Naive thymus-derived CD4-positive, alpha-beta T cell (primary cell): ENCODE measurements at regions of chr16 and their contacts with region 1.

Region 1: DNA sequence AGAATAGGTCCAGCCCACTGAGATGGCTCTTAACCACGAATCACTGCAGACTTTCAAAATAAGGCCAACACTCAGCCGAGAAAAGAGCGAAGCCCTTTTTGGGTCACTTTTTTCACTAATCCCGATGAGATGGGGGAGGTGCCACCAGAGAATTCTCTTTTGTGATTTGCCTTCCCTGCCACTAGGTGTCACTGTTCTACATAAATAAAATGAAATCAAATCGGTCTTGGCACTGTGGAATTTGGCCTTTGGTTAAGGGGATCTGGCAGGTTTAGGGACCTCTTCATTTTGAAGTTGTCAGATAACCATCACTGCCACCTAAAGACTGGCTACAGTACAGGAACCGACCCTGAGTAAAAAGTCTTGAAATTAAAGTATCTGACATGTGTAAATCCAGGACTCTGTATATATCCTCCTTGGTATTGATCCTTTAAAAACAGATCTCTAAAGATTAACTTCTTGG is 147.0 kb downstream of the HS3ST4 start:
- DNase-seq: peak in 8 of 9 donors; percentile 13 to 59 (median 38)
- ATAC-seq: peak; percentile 54
- H3K4me3 ChIP-seq: no peak overlapping the region
- H3K4me3 Mint-ChIP-seq: peak overlapping the region in 1 of 10 donors; percentile 8
- H3K27ac ChIP-seq: no peak overlapping the region
- H3K27ac Mint-ChIP-seq: no peak overlapping the region
- H3K4me1 ChIP-seq: no peaks in the 10 kb centered on the region
- H3K4me1 Mint-ChIP-seq: peaks cover 0 to 5% (median 0%) of the 10 kb centered on the region in 7 donors
- H3K27me3 ChIP-seq: no peaks in the 10 kb centered on the region
- H3K27me3 Mint-ChIP-seq: peaks cover 8 to 22% (median 15%) of the 10 kb centered on the region in 5 donors

Region 2: DNA sequence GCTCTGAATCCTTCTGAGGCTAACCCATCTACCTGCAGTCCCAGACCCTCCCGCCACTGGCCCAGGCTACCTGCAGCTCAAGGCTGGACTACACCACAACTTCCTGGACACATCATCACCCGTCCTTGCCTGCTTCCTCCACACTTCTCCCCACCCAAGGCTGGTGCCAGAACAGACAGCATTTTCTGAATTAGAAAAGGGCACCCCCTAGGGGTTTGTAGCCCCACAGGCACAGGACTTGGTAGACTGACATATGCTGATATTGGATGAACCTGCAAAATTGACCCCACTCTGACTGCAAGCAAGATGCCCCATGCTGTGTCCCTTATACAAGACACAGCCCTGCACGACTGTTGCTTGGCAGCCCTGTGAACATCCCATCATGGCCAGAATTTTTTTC is 956.4 kb after region 1 on chr16:
- CTCF ChIA-PET with region 1: no interaction called
- POLR2A ChIA-PET with region 1: no interaction called
- intact Hi-C with region 1: loop called in 1 of 2 experiments (anchors 1 kb)
- DNase-seq: peak in 1 of 9 donors; percentile 33
- ATAC-seq: no peak
- H3K4me3 ChIP-seq: no peak overlapping the region
- H3K4me3 Mint-ChIP-seq: peak overlapping the region in 1 of 10 donors; percentile 33
- H3K27ac ChIP-seq: no peak overlapping the region
- H3K27ac Mint-ChIP-seq: no peak overlapping the region
- H3K4me1 ChIP-seq: no peaks in the 10 kb centered on the region
- H3K4me1 Mint-ChIP-seq: peaks cover 0 to 10% (median 0%) of the 10 kb centered on the region in 7 donors
- H3K27me3 ChIP-seq: no peaks in the 10 kb centered on the region
- H3K27me3 Mint-ChIP-seq: peaks cover 17 to 55% (median 35%) of the 10 kb centered on the region in 5 donors

Region 3: DNA sequence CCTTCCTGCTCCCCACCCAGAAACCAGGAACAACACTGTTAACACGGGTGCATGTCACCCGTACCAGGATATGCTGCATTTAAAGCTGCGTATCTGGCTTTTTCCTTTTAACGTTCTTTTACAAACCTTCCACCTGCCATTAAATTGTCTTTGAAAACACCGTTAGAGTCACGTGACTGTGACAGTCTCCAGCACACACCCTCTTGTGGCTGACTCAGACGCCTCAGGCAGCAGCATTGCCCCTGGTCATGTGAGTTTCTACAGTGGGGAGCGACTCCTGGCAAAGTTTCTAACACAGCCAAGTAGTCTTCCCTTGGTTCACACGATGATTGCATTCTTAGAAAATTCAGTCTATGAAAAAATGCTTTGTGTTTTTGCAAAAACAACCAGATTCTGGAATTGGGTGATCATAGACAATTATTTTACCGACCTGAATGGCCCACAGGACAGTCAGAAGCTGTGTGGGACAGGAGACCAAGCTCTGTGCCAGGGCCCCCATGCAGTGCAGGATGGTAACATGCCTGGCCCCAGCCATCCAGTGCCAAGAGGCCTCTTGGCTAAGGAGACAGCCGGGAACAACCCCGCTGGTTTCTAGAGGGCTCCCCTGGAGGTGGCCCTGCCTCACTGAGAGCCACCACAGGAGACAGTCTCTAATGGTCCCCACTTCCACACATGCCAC is 1910.3 kb after region 1 on chr16:
- CTCF ChIA-PET with region 1: interaction called, 4 read pairs
- POLR2A ChIA-PET with region 1: no interaction called
- intact Hi-C with region 1: loop called in 1 of 2 experiments (anchors 10 kb)
- DNase-seq: peak in 6 of 9 donors; percentile 25 to 45 (median 34)
- ATAC-seq: peak; percentile 81
- H3K4me3 ChIP-seq: no peak overlapping the region
- H3K4me3 Mint-ChIP-seq: peak overlapping the region; percentile 13 to 75 (median 60)
- H3K27ac ChIP-seq: no peak overlapping the region
- H3K27ac Mint-ChIP-seq: peak overlapping the region in 4 of 9 donors; percentile 3 to 91 (median 39)
- H3K4me1 ChIP-seq: no peaks in the 10 kb centered on the region
- H3K4me1 Mint-ChIP-seq: peaks cover 4 to 16% (median 6%) of the 10 kb centered on the region in 7 donors
- H3K27me3 ChIP-seq: no peaks in the 10 kb centered on the region
- H3K27me3 Mint-ChIP-seq: no peaks in the 10 kb centered on the region